Body of pancreas (tissue), 4 donors: ENCODE measurements at regions of chr2 and their contacts with region 1.

Region 1: DNA sequence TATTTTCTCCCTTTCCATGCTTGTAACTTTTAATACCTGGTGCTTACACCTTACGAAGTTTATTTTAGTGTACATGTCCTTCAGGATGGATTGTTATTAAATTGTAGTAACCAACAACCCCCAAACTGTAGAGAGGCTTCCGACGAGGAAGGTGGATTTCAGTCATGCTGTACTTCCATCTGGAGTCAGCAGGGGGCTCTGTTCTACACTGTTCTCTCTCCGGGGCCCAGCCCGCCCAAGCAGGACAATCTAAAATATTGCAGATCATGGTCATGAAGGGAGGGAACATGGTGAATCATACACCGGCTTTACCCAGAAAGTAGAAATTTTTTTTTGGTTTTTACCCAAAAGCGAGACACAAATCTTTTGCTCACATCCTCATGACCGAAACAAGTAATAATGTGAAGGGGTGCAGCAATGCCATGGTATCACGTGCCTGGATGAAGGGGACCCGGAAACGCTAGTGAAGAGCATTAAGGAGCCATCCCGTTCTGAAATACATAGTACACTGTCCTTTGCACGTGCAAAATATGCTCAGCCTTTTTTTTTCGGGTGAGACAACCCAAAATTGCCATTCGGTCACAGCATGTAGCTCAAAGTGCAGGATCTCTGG is 884.8 kb downstream of the EPHA4 start:
- DNase-seq: peak; percentile 66 to 76 (median 69)
- ATAC-seq: peak; percentile 64
- H3K4me3 ChIP-seq: no peak overlapping the region
- H3K27ac ChIP-seq: no peak overlapping the region
- H3K4me1 ChIP-seq: no peaks in the 10 kb centered on the region
- H3K27me3 ChIP-seq: no peaks in the 10 kb centered on the region
- CTCF ChIP-seq: peak; percentile 61 to 82 (median 74)
- POLR2A ChIP-seq: no peak

Region 2: GRCh38 chr2:220646424-220646823 is 40.9 kb before region 1 on chr2:
- intact Hi-C with region 1: no loop called
- DNase-seq: no peak
- ATAC-seq: no peak
- H3K4me3 ChIP-seq: no peak overlapping the region
- H3K27ac ChIP-seq: no peak overlapping the region
- H3K4me1 ChIP-seq: no peaks in the 10 kb centered on the region
- H3K27me3 ChIP-seq: no peaks in the 10 kb centered on the region
- CTCF ChIP-seq: no peak
- POLR2A ChIP-seq: no peak

Region 3: DNA sequence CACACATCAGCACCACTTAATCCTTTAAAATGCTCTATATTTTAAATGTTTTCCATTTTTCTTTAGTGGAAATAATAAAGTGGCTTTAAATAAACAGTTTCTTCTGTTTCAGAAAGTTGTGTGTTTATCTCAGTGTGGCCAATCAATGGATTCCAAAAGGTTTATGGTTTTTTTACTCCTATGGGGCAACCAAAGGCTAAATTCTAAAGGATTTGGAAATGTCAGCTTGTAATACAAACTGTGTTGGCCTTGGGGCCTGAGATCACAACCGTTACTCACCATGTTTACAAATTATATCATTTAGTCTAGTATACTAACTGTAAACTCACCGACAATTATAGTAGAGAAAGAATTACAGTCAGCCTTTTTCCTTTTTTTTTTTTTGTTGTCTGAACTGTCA is 57.5 kb after region 1 on chr2:
- intact Hi-C with region 1: no loop called
- DNase-seq: no peak
- ATAC-seq: no peak
- H3K4me3 ChIP-seq: no peak overlapping the region
- H3K27ac ChIP-seq: no peak overlapping the region
- H3K4me1 ChIP-seq: no peaks in the 10 kb centered on the region
- H3K27me3 ChIP-seq: no peaks in the 10 kb centered on the region
- CTCF ChIP-seq: no peak
- POLR2A ChIP-seq: no peak

Region 4: GRCh38 chr2:221042926-221043325 is 355.6 kb after region 1 on chr2:
- intact Hi-C with region 1: no loop called
- DNase-seq: no peak
- ATAC-seq: no peak
- H3K4me3 ChIP-seq: no peak overlapping the region
- H3K27ac ChIP-seq: no peak overlapping the region
- H3K4me1 ChIP-seq: no peaks in the 10 kb centered on the region
- H3K27me3 ChIP-seq: no peaks in the 10 kb centered on the region
- CTCF ChIP-seq: no peak
- POLR2A ChIP-seq: no peak

Region 5: DNA sequence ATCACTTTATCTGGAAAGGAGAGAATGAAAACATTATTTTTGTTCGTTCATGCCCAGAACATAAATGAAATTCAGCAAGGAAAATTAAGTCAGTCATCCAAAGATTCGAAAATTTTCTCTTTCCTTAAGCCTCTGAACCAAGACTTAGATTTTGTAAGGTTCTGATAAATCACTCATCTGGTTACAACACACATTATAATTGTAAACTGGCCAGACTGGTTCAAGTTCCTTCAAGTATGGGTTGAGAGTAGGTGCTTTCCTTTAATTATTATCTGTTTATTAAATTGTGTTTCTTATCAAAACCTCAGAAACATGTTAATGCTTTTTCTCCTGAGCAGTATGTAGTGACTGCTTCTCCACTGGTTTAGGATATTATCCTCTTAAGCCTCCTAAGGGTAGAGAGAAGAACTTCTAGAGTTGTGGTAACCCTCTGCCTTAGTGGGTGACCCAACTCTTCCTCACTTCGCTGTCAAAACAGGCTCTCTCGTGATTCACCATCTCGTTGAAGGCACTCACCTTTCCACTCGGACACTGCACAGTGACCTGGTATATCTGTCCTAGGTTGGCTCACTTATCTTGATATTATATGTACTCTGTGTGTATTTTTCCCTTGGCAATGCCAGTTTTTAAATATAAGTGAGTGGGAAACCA is 1285.6 kb after region 1 on chr2:
- intact Hi-C with region 1: loop called (anchors 10 kb)
- DNase-seq: no peak
- ATAC-seq: no peak
- H3K4me3 ChIP-seq: no peak overlapping the region
- H3K27ac ChIP-seq: no peak overlapping the region
- H3K4me1 ChIP-seq: no peaks in the 10 kb centered on the region
- H3K27me3 ChIP-seq: no peaks in the 10 kb centered on the region
- CTCF ChIP-seq: no peak
- POLR2A ChIP-seq: no peak